ENCODE measurements at regions of chr5 and their contacts with region 1.

Region 1: GRCh38 chr5:36739751-36740221 is 133.4 kb downstream of the SLC1A3 start:
- DNase-seq: peak in 2 of 4 donors; percentile 61 to 71
- ATAC-seq: peak; percentile 86
- H3K4me3 ChIP-seq: no peak overlapping the region
- H3K27ac ChIP-seq: no peak overlapping the region
- H3K4me1 ChIP-seq: peaks cover 0 to 22% of the 10 kb centered on the region in 2 donors
- H3K27me3 ChIP-seq: peaks cover 0 to 9% of the 10 kb centered on the region in 2 donors
- CTCF ChIP-seq: peak; percentile 70

Region 2: GRCh38 chr5:36870399-36871040 is 130.7 kb after region 1 on chr5:
- intact Hi-C with region 1: loop called in 1 of 2 experiments (anchors 5 kb)
- DNase-seq: peak in 1 of 4 donors; percentile 65
- ATAC-seq: peak; percentile 75
- H3K4me3 ChIP-seq: no peak overlapping the region
- H3K27ac ChIP-seq: no peak overlapping the region
- H3K4me1 ChIP-seq: peaks cover 7 to 27% of the 10 kb centered on the region in 2 donors
- H3K27me3 ChIP-seq: no peaks in the 10 kb centered on the region
- CTCF ChIP-seq: peak; percentile 57 to 61

Region 3: DNA sequence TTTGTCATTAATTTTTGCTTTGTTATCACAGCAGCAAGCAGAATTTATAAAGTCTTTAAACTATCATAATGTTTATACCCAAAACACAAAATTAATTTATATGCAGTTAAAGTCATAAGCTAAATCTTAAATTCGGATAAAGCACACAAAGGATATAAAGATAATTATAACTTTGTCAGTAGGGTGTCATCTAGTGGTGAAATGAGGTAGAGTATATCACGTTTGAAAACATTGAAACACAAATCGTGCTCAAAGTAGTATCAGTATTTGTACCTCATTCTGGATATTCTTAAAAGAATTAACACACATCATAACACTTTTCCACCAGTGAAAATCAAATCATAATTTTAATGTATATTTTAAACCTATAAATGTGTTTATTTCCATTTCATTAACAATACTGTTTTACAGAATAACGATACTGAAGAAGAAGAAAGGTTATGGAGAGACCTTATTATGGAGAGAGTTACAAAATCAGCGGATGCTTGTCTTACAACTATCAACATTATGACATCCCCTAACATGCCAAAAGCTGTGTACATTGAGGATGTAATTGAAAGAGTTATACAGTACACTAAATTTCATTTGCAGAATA is 266.3 kb after region 1 on chr5:
- intact Hi-C with region 1: loop called in 1 of 2 experiments (anchors 10 kb)
- DNase-seq: peak in 1 of 4 donors; percentile 40
- ATAC-seq: peak; percentile 67
- H3K4me3 ChIP-seq: no peak overlapping the region
- H3K27ac ChIP-seq: no peak overlapping the region
- H3K4me1 ChIP-seq: no peaks in the 10 kb centered on the region
- H3K27me3 ChIP-seq: no peaks in the 10 kb centered on the region
- CTCF ChIP-seq: peak; percentile 38 to 54

Measured in left lung (tissue), 14 donors.